ENCODE measurements at regions of chr1 and their contacts with region 1.

Region 1: GRCh38 chr1:206612129-206612876 is at the start of gene EIF2D:
- DNase-seq: peak; percentile 100
- CTCF ChIP-seq: peak; percentile 95

Region 2: DNA sequence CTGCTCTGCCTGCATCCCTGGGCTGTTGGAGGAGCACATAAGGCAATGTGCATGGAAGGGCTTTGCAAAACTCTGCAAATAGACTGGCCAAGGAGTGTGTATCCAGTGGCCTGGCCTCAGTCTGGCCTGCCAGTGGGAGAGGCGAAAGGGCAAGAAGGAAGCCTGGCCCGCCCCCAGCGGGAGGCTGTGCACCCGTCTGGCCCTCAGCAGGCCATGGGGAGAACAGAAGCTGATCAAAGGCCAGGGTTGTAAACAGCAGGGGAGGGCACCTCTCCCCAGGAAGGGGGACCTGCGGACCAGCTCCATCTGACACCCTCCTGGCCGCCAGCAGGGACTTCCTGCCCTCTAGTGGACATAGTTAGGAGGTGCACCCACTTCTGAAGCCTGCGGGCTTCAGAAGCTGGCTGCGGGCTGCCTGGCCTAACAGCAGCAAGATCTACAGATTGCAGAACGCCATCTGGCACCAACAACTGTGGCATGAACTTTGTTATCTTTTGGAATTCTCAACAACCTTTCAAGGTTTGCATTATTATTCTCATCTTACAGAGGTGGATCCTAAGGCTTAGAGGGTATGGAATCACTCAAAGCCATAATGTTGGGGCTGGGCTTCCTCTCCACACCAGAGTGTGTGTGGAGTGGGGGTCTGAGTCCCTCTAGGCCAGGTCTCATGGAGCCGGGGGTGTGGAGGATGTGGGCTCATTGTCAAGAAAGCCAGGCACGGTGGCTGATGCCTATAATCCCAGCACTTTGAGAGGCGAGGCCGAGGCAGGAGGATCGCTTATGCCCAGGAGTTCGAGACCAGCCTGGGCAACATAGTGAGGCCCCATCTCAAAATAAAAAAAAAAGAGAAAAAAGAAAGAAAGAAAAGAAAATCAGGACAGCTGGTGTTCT is 1126.7 kb before region 1 on chr1:
- CTCF ChIA-PET with region 1: no interaction called
- POLR2A ChIA-PET with region 1: no interaction called
- DNase-seq: peak; percentile 87
- CTCF ChIP-seq: peak; percentile 90

Region 3: GRCh38 chr1:206445116-206445515 is 167.2 kb before region 1 on chr1:
- CTCF ChIA-PET with region 1: no interaction called
- POLR2A ChIA-PET with region 1: no interaction called
- DNase-seq: no peak
- CTCF ChIP-seq: no peak

Region 4: GRCh38 chr1:206496131-206496793 is 116.0 kb before region 1 on chr1:
- CTCF ChIA-PET with region 1: interaction called, 15 read pairs
- POLR2A ChIA-PET with region 1: no interaction called
- DNase-seq: peak; percentile 75
- CTCF ChIP-seq: no peak

Region 5: DNA sequence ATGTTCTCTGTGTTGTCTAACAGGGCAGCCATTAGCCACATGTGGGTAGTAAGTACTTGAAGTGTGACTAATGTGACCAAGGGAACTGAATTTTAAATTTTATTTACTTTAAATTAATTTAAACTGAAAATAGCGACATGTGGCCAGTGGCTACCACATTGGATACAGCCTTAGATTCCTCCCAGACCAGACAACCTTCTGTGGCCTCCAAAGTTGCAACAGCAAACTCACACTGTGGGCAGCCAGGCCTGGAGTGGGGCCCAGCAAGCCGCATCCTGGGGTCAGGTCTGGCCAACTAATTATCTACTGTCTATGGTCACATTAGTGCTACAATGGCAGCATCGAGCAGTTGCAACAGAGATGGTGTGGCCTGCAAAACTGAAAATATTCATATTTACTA is 11.8 kb before region 1 on chr1:
- CTCF ChIA-PET with region 1: interaction called, 20 read pairs
- POLR2A ChIA-PET with region 1: no interaction called
- DNase-seq: no peak
- CTCF ChIP-seq: no peak

Region 6: GRCh38 chr1:206635080-206635977 is 23.0 kb after region 1 on chr1 and contains the start of gene DYRK3:
- CTCF ChIA-PET with region 1: interaction called, 26 read pairs
- POLR2A ChIA-PET with region 1: interaction called, 6 read pairs
- DNase-seq: peak; percentile 97
- CTCF ChIP-seq: no peak